Activated T-helper 1 cell treated with anti-CD3 and anti-CD28 coated beads, Interleukin-12 subunit alpha, Interleukin-12 subunit beta, Interleukin-2, Interleukin-4 antibody, amounts not matched to agents 30 ng/mL and 10 ng/mL and 1 ng/mL, durations not matched to agents 14 hours and 24 hours and 36 hours (primary cell): ENCODE measurements at regions of chr11 and their contacts with region 1.

Region 1: GRCh38 chr11:130314750-130315285 is at the start of gene ZBTB44:
- DNase-seq: peak; percentile 82
- H3K4me3 Mint-ChIP-seq: peak within 1 kb of the TSS; percentile 93
- H3K27ac Mint-ChIP-seq: peak within 1 kb of the TSS; percentile 95
- H3K4me1 Mint-ChIP-seq: peaks cover 44% of the 10 kb centered on the region
- H3K27me3 Mint-ChIP-seq: peaks cover 3% of the 10 kb centered on the region
- total RNA-seq, gene ZBTB44: 32.9 and 33.0 TPM in 2 replicates

Region 2: GRCh38 chr11:130022798-130023583 is 291.8 kb before region 1 on chr11:
- intact Hi-C with region 1: no loop called
- DNase-seq: no peak
- H3K4me3 Mint-ChIP-seq: no peak overlapping the region
- H3K27ac Mint-ChIP-seq: no peak overlapping the region
- H3K4me1 Mint-ChIP-seq: no peaks in the 10 kb centered on the region
- H3K27me3 Mint-ChIP-seq: peaks cover 8% of the 10 kb centered on the region

Region 3: DNA sequence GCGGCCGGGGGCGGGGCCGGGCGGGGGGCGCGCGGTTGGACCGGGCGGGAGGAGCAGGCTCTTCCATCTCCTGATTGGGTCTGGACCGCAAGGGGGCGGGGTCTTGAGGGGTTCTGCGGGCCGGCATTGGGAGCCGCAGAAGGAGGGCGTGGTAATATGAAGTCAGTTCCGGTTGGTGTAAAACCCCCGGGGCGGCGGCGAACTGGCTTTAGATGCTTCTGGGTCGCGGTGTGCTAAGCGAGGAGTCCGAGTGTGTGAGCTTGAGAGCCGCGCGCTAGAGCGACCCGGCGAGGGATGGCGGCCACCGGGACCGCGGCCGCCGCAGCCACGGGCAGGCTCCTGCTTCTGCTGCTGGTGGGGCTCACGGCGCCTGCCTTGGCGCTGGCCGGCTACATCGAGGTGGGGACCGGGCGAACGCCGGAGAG is 245.1 kb before region 1 on chr11 and contains the start of gene APLP2:
- intact Hi-C with region 1: loop called (anchors 1 kb)
- DNase-seq: peak; percentile 96
- H3K4me3 Mint-ChIP-seq: peak within 1 kb of the TSS; percentile 94
- H3K27ac Mint-ChIP-seq: peak within 1 kb of the TSS; percentile 89
- H3K4me1 Mint-ChIP-seq: peaks cover 17% of the 10 kb centered on the region
- H3K27me3 Mint-ChIP-seq: peaks cover 25% of the 10 kb centered on the region
- total RNA-seq, gene APLP2: 47.0 and 47.8 TPM in 2 replicates

Region 4: DNA sequence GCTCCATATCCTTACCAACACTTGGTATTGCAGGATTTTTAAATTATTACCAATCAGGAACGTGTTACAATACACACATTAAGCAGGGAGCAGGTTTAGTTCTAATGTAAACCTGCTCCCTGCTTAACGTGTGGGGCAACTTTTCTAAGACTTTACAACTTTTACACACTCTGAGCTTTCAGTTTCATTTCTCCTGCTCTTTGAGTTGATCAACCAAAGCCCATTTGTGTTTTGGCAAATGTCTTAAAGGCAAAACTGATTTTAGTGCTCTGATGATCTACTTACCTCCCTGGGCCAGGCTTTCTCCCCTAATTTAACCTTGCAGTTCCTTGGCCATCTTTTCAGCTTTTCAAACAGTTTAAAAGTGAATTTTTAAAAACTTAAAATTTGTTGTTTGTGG is 71.0 kb before region 1 on chr11:
- intact Hi-C with region 1: loop called (anchors 2 kb)
- DNase-seq: no peak
- H3K4me3 Mint-ChIP-seq: peak overlapping the region; percentile 43
- H3K27ac Mint-ChIP-seq: peak overlapping the region; percentile 32
- H3K4me1 Mint-ChIP-seq: peaks cover 40% of the 10 kb centered on the region
- H3K27me3 Mint-ChIP-seq: no peaks in the 10 kb centered on the region

Region 5: DNA sequence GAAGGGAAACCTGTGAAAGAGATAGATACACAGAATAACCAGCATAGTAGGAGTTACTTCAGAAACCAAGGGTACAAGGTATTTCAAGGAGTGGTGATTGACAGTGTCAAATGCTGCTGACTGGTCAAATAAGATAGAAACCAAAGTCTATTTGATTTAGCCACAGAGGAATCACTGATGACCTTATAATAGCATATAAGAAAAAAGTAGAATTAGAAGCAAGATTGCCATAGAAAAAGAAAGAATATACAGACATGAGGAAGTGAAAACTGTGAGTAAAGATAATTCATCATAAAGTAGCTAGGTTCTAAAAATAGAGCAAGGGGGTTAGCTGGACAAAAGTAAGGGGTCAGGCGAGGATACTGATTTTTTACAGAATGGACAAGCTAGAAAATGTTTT is 14.3 kb before region 1 on chr11:
- intact Hi-C with region 1: loop called (anchors 1 kb)
- DNase-seq: no peak
- H3K4me3 Mint-ChIP-seq: no peak overlapping the region
- H3K27ac Mint-ChIP-seq: no peak overlapping the region
- H3K4me1 Mint-ChIP-seq: peaks cover 30% of the 10 kb centered on the region
- H3K27me3 Mint-ChIP-seq: no peaks in the 10 kb centered on the region

Region 6: GRCh38 chr11:130390071-130390758 is 75.4 kb after region 1 on chr11:
- intact Hi-C with region 1: loop called (anchors 1 kb)
- DNase-seq: no peak
- H3K4me3 Mint-ChIP-seq: no peak overlapping the region
- H3K27ac Mint-ChIP-seq: no peak overlapping the region
- H3K4me1 Mint-ChIP-seq: peaks cover 13% of the 10 kb centered on the region
- H3K27me3 Mint-ChIP-seq: peaks cover 8% of the 10 kb centered on the region

Region 7: GRCh38 chr11:130882138-130882551 is 567.3 kb after region 1 on chr11:
- intact Hi-C with region 1: loop called (anchors 10 kb)
- DNase-seq: no peak
- H3K4me3 Mint-ChIP-seq: no peak overlapping the region
- H3K27ac Mint-ChIP-seq: peak overlapping the region; percentile 19
- H3K4me1 Mint-ChIP-seq: peaks cover 11% of the 10 kb centered on the region
- H3K27me3 Mint-ChIP-seq: no peaks in the 10 kb centered on the region